GM10248 (cell line): ENCODE measurements at regions of chr11 and their contacts with region 1.

Region 1: DNA sequence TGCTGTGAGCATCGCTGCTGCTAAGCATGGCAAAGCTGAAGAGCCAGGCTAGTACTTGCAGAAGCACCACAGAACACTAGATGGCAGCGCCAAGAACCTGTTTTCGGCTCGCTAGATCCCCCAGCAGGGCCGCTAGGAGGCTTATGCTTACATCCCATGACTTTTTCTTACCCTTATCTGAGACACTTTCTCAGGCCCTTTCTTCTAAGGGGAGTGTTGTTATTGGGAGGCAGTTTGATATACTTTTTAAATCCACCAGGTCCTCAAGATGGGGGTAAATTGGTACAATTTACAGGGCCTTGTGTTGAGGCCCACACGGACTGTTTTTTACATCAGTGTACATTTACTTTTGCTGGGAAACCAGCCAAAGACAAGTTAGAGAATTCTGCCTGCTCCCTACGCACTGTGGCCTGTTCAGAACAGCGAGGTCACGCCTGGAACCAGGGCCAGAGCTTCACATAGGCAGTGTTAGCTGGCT is 4.0 kb downstream of the TRIM6 start:
- DNase-seq: peak; percentile 77
- CTCF ChIP-seq: peak; percentile 90

Region 2: DNA sequence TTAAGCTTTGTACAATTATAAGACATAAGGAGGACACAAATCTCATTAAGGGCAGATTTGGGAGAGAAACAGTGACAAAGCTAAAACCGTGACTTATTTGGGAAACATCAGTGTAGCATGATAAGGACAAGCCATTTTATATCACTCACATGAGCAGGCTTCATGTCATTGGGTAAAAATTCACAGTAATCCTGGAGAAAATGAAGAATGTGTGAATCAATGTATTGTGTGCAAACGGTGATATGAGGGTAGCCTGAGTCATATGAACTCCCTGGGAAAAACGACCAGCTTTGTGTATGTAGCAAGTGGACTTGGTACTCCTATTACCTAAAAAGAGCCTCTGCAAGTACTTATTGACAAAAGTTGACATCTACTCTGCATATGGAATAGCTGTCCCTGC is 18.4 kb after region 1 on chr11:
- CTCF ChIA-PET with region 1: interaction called, 19 read pairs
- POLR2A ChIA-PET with region 1: no interaction called
- DNase-seq: no peak
- CTCF ChIP-seq: no peak

Region 3: DNA sequence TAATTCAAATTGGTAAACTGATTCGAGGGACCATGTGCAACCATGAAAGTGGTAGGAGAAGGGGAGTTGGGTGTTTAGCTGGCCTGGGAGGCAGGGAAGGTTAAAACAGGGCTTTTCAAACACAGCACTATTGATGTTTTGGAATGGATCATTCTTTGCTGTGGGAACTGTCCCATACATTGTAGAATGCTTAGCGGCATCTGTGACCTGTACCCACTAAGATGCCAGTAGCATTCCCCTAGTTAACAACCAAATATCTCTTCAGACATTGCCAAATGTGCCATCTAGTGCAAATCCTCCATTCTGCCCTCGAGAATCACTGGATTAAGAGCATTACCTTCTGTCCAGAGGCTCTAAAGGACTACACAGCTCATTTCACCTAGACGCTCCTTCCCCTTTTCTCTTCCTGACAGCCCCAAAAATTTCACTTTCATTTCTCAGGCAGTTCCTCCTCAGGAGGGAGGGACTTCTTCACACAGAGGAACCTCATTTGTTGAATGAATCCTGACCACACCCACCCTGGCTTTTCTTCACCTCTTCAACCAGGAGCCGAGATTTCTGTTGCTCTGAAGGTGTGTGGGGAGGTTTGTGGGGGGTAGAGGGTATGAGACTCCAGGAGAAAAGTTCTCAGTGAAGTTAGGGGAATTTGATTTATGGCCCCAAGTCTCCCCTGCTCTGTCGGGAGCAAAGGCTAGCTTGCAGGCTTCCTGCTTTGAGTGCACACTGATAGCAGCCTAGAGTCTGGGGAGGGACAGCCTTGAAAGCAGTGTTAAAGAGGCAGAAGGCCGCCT is 24.3 kb after region 1 on chr11 and contains the start of gene TRIM34:
- CTCF ChIA-PET with region 1: interaction called, 13 read pairs
- POLR2A ChIA-PET with region 1: no interaction called
- DNase-seq: peak; percentile 88
- CTCF ChIP-seq: no peak

Region 4: GRCh38 chr11:5684646-5685362 is 84.4 kb after region 1 on chr11 and contains the start of gene TRIM5:
- CTCF ChIA-PET with region 1: interaction called, 15 read pairs
- POLR2A ChIA-PET with region 1: interaction called, 3 read pairs
- DNase-seq: peak; percentile 87
- CTCF ChIP-seq: peak; percentile 81

Region 5: GRCh38 chr11:5808500-5809121 is 208.2 kb after region 1 on chr11 and contains the start of gene OR52N2:
- CTCF ChIA-PET with region 1: interaction called, 14 read pairs
- POLR2A ChIA-PET with region 1: no interaction called
- DNase-seq: peak; percentile 34
- CTCF ChIP-seq: peak; percentile 89